PC-9 (cell line): ENCODE measurements at regions of chr1 and their contacts with region 1.

Region 1: DNA sequence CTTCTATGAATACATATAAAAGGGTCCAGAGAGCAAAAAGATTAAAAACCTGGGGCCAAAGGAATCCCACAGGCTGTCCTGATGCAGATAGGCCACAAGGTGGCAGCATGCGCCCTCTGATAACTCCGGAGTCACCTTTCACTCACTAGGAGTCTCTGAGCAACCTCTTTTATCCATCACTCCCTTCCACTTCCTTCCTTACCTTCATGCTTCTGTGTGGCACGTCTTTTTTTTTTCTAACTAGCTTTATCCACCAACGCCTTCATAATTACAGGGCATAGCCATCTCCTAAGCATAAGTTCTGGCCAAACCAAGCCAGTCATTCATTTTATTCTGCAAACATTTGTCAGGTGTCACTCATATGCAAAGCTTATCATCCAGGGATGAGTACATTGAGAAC is 3.9 kb upstream of the PGLYRP4 start:
- DNase-seq: peak; percentile 57 to 61
- H3K4me3 ChIP-seq: no peak overlapping the region
- H3K27ac ChIP-seq: no peak overlapping the region
- H3K4me1 ChIP-seq: peaks cover 27% of the 10 kb centered on the region
- H3K27me3 ChIP-seq: peaks cover 8% of the 10 kb centered on the region; the same call in 1 of the 2 replicates
- CTCF ChIP-seq: peak; percentile 93

Region 2: GRCh38 chr1:152926091-152926490 is 426.4 kb before region 1 on chr1:
- CTCF ChIA-PET with region 1: no interaction called
- POLR2A ChIA-PET with region 1: no interaction called
- intact Hi-C with region 1: no loop called
- DNase-seq: peak in 1 of 2 experiments; percentile 54
- H3K4me3 ChIP-seq: no peak overlapping the region
- H3K27ac ChIP-seq: no peak overlapping the region
- H3K4me1 ChIP-seq: no peaks in the 10 kb centered on the region; the same call in 1 of the 2 replicates
- H3K27me3 ChIP-seq: no peaks in the 10 kb centered on the region
- CTCF ChIP-seq: peak; percentile 77

Region 3: DNA sequence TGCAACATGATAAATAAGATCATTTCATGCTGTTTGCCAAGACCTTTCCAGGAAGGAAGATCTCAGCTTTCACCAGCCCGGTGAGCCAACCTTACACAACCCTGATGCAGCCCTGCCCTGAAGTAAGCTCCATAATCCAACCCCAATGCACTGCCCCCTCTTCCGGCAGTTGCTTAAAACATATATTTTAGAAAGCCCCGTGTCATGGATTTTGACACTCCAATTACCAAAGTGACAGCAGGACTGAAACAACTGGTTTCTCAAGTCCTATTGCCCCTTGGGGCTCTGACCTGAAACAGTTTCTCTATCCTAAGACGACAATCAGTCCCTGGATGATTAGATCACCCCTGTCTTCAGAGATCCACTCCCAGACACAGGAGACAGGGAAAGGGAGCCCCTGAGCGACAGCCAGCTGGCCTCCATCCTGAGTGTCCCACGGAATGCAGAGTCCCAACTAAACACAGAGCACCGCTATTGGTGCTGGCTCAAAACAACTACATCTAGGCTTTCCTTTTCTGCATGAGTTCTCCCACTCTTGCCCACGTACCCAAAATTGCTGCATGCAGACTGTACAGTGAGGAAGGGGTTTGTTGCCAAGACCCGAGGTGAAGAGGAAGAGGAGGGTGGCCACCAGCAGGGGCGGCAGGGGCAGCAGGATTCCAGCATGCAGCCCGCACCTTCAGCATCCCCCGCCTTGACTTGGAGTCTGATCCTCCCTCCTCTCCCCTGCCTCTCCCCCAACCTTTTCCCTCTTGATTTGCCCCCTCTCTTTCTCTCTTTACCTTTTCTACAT is 13.0 kb after region 1 on chr1:
- CTCF ChIA-PET with region 1: interaction called, 10 read pairs
- POLR2A ChIA-PET with region 1: no interaction called
- intact Hi-C with region 1: loop called (anchors 1 kb)
- DNase-seq: peak; percentile 68 to 99
- H3K4me3 ChIP-seq: peak overlapping the region; percentile 26; the same call in 1 of the 2 replicates
- H3K27ac ChIP-seq: peak overlapping the region; percentile 96
- H3K4me1 ChIP-seq: peaks cover 90% of the 10 kb centered on the region
- H3K27me3 ChIP-seq: no peaks in the 10 kb centered on the region
- CTCF ChIP-seq: peak; percentile 62

Region 4: GRCh38 chr1:153386500-153386901 is 34.0 kb after region 1 on chr1:
- CTCF ChIA-PET with region 1: no interaction called
- POLR2A ChIA-PET with region 1: no interaction called
- intact Hi-C with region 1: no loop called
- DNase-seq: no peak
- H3K4me3 ChIP-seq: no peak overlapping the region
- H3K27ac ChIP-seq: no peak overlapping the region
- H3K4me1 ChIP-seq: peaks cover 23% of the 10 kb centered on the region
- H3K27me3 ChIP-seq: no peaks in the 10 kb centered on the region
- CTCF ChIP-seq: no peak

Region 5: DNA sequence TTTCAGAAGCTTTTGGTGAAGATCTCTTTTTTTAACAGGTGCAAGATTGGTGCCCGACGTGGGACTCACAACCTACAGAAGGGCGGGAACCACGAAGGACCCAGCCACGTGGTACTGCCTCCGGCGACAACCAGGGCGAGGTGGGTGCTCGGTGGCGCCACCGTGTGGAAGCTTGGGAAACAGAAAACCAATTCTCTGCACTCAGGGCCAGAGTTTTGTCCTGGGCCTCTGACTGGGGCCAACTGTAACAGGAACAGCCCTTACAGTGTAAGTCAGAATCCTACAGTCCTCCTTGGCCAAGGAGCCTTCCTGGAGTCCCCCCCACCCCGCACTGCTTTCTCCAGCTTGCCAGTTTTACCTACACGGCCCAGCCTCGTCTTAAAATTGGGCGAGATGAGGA is 52.2 kb after region 1 on chr1:
- CTCF ChIA-PET with region 1: interaction called, 3 read pairs
- POLR2A ChIA-PET with region 1: no interaction called
- intact Hi-C with region 1: loop called (anchors 2 kb)
- DNase-seq: peak in 1 of 2 experiments; percentile 24
- H3K4me3 ChIP-seq: no peak overlapping the region
- H3K27ac ChIP-seq: no peak overlapping the region
- H3K4me1 ChIP-seq: no peaks in the 10 kb centered on the region
- H3K27me3 ChIP-seq: peaks cover 14% of the 10 kb centered on the region; the same call in 1 of the 2 replicates
- CTCF ChIP-seq: peak; percentile 78

Region 6: GRCh38 chr1:153494976-153495535 is 142.5 kb after region 1 on chr1:
- CTCF ChIA-PET with region 1: interaction called, 9 read pairs
- POLR2A ChIA-PET with region 1: no interaction called
- intact Hi-C with region 1: loop called (anchors 1 kb)
- DNase-seq: peak in 1 of 2 experiments; percentile 72
- H3K4me3 ChIP-seq: no peak overlapping the region
- H3K27ac ChIP-seq: no peak overlapping the region
- H3K4me1 ChIP-seq: peaks cover 19% of the 10 kb centered on the region
- H3K27me3 ChIP-seq: no peaks in the 10 kb centered on the region
- CTCF ChIP-seq: peak; percentile 98